Activated CD4-positive, alpha-beta T cell treated with anti-CD3 and anti-CD28 coated beads, Interleukin-2, amount 10 ng/mL, durations not matched to agents 24 days and 14 days (primary cell): ENCODE measurements at regions of chr2 and their contacts with region 1.

Region 1: DNA sequence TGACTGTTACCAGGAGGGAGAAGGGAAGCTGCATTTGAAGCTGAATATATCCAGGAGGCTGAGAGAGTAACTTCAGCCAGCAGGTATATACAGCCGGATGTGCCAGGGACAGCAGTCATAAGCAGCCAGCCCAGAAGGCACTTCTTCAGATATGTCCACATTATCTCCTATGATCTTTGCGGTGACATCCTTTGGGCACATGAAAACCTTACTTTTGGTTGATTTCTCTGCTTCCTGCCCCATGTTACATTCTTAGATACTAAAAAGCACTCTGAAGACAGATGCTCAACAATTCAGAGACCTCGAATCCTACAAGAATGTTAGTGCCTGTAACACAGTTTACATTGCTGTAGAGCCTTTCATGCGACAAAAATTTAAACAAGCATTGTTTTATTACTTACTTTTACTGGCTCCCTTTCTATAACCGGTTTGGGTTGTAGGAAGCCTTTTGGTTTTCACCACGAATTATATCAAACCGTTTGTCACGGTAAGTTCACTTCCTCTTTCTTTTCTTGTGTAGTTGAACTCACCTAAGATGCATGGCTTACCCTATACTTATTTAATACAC is 50.3 kb upstream of the TLK1 start:
- DNase-seq: peak; percentile 83
- H3K4me3 Mint-ChIP-seq: peak overlapping the region; percentile 67
- H3K27ac Mint-ChIP-seq: peak overlapping the region; percentile 68
- H3K4me1 Mint-ChIP-seq: peaks cover 27% of the 10 kb centered on the region
- H3K27me3 Mint-ChIP-seq: peaks cover 3% of the 10 kb centered on the region

Region 2: DNA sequence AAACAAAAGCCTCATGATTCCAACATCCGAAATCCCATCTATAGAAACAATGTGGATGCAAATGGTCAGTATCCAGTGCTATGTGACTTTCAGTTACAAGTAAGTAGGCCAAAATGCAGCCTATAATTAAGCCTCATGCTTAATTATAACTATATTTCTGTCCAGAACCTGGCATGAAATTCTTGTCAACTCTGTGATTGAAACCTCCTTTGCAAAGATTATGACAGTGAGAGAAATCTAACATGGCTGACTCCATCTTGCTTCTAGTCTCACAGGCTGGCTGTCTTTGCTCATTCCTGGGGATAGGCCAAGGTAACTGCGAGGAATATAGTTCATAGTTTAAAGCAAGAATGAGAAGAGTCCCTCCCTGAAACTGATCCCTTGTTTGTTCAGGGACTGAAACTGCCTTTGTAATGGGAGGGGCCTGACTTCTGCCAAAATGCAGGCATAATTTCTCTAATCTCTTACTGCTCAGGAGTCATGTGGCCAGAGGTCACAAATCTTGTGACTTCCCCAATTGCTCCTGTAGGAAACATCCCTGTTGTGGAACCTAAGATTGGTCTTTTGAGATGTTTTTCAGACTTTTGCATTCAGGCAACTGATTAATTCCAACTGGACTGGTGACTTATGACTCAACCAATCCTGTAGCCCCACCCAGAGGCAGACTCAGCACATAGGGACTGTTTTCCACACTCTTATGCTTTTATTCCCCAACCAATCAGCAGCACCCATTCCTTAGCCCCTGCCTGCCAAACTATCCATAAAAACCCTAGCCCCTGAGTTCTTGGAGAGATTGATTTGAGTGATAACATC is 34.2 kb after region 1 on chr2:
- intact Hi-C with region 1: loop called (anchors 5 kb)
- DNase-seq: no peak
- H3K4me3 Mint-ChIP-seq: no peak overlapping the region
- H3K27ac Mint-ChIP-seq: no peak overlapping the region
- H3K4me1 Mint-ChIP-seq: peaks cover 43% of the 10 kb centered on the region
- H3K27me3 Mint-ChIP-seq: no peaks in the 10 kb centered on the region

Region 3: DNA sequence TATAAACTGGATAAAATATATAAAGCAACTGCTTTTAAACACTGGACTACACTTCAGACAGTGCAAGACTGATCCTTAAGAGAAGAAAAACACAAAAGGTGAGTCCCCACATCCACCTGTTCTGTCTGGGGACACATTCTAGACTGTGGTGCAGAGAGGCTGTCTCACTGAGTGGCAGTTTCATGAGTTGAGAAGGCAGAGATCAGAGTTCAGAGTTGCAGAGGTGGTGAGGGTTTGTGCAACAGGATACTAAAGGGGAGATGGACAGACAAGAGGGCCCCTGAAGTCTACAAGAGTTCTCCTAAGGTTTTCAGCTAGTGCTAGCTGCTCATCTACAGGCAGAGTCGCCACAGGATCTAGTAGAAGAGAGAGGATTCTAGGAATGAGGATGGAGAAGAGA is 154.8 kb after region 1 on chr2:
- intact Hi-C with region 1: no loop called
- DNase-seq: no peak
- H3K4me3 Mint-ChIP-seq: no peak overlapping the region
- H3K27ac Mint-ChIP-seq: no peak overlapping the region
- H3K4me1 Mint-ChIP-seq: no peaks in the 10 kb centered on the region
- H3K27me3 Mint-ChIP-seq: no peaks in the 10 kb centered on the region